Esophagus muscularis mucosa (tissue), 4 donors: ENCODE measurements at regions of chr16 and their contacts with region 1.

Region 1: DNA sequence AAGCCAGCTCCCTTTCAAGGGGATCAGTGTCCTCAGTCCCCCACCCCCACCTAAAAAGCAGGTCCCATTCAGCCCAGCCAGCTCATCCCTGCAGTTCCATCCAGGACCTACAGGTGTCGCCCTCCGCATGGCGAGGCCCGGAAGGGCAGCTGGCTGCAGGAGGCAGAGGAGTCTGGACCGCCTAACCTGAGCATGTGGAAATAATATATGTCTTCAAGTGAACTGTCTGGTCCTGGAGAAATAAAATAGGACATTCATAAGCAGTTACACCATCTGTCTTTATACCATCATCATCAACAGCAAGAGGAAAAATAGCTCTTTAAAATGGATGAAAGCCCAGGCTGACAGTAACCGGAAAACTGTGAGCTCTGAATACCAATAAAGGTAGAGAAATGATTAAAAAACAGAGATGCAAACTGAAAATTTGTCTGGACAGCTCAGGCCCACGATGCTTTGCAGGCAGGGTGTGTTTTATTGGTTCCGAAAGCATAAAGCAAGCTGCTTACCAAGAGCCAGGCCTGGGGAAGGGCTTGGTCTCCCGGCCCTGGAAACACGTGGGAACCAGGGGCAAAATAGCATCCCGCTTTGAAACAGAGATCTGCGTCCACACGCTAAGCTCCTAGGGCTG is 215.2 kb downstream of the ZFHX3 start:
- DNase-seq: peak; percentile 95
- H3K4me3 ChIP-seq: no peak overlapping the region
- H3K27ac ChIP-seq: peak overlapping the region in 3 of 4 donors; percentile 33 to 53 (median 47)
- H3K4me1 ChIP-seq: peaks cover 4 to 28% (median 14%) of the 10 kb centered on the region in 4 donors
- H3K27me3 ChIP-seq: no peaks in the 10 kb centered on the region
- CTCF ChIP-seq: peak in 2 of 3 experiments; percentile 90 to 98
- EP300 ChIP-seq: no peak
- POLR2A ChIP-seq: no peak

Region 2: GRCh38 chr16:73071131-73071940 is 238.6 kb after region 1 on chr16:
- intact Hi-C with region 1: loop called (anchors 5 kb)
- DNase-seq: no peak
- H3K4me3 ChIP-seq: peak overlapping the region; percentile 39 to 56 (median 44)
- H3K27ac ChIP-seq: peak overlapping the region; percentile 73 to 87 (median 86)
- H3K4me1 ChIP-seq: peaks cover 48 to 56% (median 54%) of the 10 kb centered on the region in 4 donors
- H3K27me3 ChIP-seq: peaks cover 0 to 11% (median 5%) of the 10 kb centered on the region in 4 donors
- CTCF ChIP-seq: no peak
- EP300 ChIP-seq: no peak
- POLR2A ChIP-seq: no peak

Region 3: DNA sequence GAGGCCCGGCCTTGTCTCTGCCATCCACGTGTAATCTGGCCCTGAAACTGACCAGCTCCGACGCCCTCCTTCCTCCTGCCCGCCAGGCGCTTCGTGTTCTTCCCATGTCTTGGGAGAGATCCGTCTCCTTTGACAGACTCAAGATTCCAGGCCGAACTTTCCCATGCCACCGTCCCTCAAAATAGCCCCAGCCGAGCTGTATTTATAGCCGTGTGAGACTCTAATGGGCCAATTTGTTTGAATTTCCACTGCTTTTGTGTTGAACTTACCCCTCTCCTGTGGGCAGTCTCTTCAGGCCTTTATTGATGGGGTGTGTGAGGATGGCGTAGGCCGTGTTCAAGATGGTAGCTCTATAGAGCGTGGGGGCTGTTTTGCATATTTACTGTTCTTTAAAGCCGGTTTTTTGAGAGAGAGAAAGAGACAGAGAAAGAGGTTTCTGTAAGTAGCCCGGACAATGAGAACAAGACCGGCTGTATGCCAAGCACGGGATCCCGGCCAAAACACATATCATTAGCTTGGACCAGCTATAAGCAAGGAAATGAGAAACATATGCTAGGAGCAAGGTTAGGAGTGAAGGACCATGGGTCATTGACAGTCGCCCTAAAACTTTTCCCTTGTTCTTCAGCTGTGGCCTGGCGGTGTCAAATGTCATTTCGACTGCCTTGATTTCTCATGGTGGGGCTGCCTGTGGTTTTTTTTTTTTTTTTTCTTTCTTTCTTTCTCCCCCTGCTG is 339.7 kb after region 1 on chr16:
- intact Hi-C with region 1: loop called (anchors 5 kb)
- DNase-seq: no peak
- H3K4me3 ChIP-seq: no peak overlapping the region
- H3K27ac ChIP-seq: peak overlapping the region; percentile 55 to 71 (median 62)
- H3K4me1 ChIP-seq: peaks cover 11 to 25% (median 21%) of the 10 kb centered on the region in 4 donors
- H3K27me3 ChIP-seq: no peaks in the 10 kb centered on the region
- CTCF ChIP-seq: peak in 1 of 3 experiments; percentile 23
- EP300 ChIP-seq: no peak
- POLR2A ChIP-seq: no peak

Region 4: GRCh38 chr16:73196670-73197069 is 363.9 kb after region 1 on chr16:
- intact Hi-C with region 1: loop called (anchors 2 kb)
- DNase-seq: no peak
- H3K4me3 ChIP-seq: no peak overlapping the region
- H3K27ac ChIP-seq: no peak overlapping the region
- H3K4me1 ChIP-seq: no peaks in the 10 kb centered on the region
- H3K27me3 ChIP-seq: peaks cover 0 to 6% (median 0%) of the 10 kb centered on the region in 4 donors
- CTCF ChIP-seq: peak; percentile 63 to 74 (median 66)
- EP300 ChIP-seq: no peak
- POLR2A ChIP-seq: no peak